Common myeloid progenitor, CD34-positive (primary cell): ENCODE measurements at regions of chr1 and their contacts with region 1.

Region 1: GRCh38 chr1:211335522-211336157 is 9.0 kb downstream of the TRAF5 start:
- DNase-seq: no peak
- H3K4me3 ChIP-seq: peak overlapping the region in 4 of 7 experiments; percentile 7 to 49 (median 41)
- H3K27ac ChIP-seq: peak overlapping the region in 1 of 2 experiments; percentile 67
- H3K4me1 ChIP-seq: peaks cover 11 to 68% (median 55%) of the 10 kb centered on the region in 4 experiments
- H3K27me3 ChIP-seq: no peaks in the 10 kb centered on the region

Region 2: GRCh38 chr1:211009944-211010343 is 325.7 kb before region 1 on chr1:
- CTCF ChIA-PET with region 1: no interaction called
- POLR2A ChIA-PET with region 1: no interaction called
- DNase-seq: no peak
- H3K4me3 ChIP-seq: no peak overlapping the region
- H3K27ac ChIP-seq: no peak overlapping the region
- H3K4me1 ChIP-seq: no peaks in the 10 kb centered on the region
- H3K27me3 ChIP-seq: peaks cover 0 to 5% (median 0%) of the 10 kb centered on the region in 5 experiments

Region 3: DNA sequence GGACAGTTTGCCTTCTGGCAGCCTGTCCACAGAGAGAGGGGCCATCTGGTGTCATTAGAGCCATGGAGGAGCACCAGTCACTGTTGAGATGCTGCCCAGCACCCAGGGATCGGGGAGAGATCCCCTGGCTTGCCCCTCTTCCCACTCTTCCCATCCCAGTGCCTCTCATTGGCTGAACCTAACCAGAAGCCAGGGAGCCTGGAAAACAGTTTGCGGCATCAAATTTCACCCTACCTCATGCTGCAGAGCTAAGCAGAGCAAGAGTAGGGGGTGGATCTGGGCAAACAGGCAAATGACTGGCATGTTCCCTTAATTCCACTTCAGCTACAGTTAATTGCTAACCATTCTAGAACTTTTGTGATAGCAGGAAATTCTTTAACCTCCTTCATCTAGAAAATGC is 10.1 kb after region 1 on chr1:
- CTCF ChIA-PET with region 1: interaction called, 109 read pairs
- POLR2A ChIA-PET with region 1: interaction called, 3 read pairs
- DNase-seq: no peak
- H3K4me3 ChIP-seq: no peak overlapping the region
- H3K27ac ChIP-seq: no peak overlapping the region
- H3K4me1 ChIP-seq: peaks cover 11 to 55% (median 43%) of the 10 kb centered on the region in 4 experiments
- H3K27me3 ChIP-seq: no peaks in the 10 kb centered on the region

Region 4: GRCh38 chr1:211372463-211372862 is 36.8 kb after region 1 on chr1:
- CTCF ChIA-PET with region 1: no interaction called
- POLR2A ChIA-PET with region 1: no interaction called
- DNase-seq: no peak
- H3K4me3 ChIP-seq: no peak overlapping the region
- H3K27ac ChIP-seq: no peak overlapping the region
- H3K4me1 ChIP-seq: peaks cover 6 to 20% (median 11%) of the 10 kb centered on the region in 4 experiments
- H3K27me3 ChIP-seq: no peaks in the 10 kb centered on the region

Region 5: GRCh38 chr1:211698161-211699026 is 362.8 kb after region 1 on chr1:
- CTCF ChIA-PET with region 1: no interaction called
- POLR2A ChIA-PET with region 1: no interaction called
- DNase-seq: peak; percentile 64 to 79 (median 77)
- H3K4me3 ChIP-seq: peak overlapping the region in 5 of 7 experiments; percentile 23 to 70 (median 51)
- H3K27ac ChIP-seq: no peak overlapping the region
- H3K4me1 ChIP-seq: peaks cover 0 to 25% (median 15%) of the 10 kb centered on the region in 4 experiments
- H3K27me3 ChIP-seq: no peaks in the 10 kb centered on the region